ENCODE measurements at regions of chr1 and their contacts with region 1.

Region 1: DNA sequence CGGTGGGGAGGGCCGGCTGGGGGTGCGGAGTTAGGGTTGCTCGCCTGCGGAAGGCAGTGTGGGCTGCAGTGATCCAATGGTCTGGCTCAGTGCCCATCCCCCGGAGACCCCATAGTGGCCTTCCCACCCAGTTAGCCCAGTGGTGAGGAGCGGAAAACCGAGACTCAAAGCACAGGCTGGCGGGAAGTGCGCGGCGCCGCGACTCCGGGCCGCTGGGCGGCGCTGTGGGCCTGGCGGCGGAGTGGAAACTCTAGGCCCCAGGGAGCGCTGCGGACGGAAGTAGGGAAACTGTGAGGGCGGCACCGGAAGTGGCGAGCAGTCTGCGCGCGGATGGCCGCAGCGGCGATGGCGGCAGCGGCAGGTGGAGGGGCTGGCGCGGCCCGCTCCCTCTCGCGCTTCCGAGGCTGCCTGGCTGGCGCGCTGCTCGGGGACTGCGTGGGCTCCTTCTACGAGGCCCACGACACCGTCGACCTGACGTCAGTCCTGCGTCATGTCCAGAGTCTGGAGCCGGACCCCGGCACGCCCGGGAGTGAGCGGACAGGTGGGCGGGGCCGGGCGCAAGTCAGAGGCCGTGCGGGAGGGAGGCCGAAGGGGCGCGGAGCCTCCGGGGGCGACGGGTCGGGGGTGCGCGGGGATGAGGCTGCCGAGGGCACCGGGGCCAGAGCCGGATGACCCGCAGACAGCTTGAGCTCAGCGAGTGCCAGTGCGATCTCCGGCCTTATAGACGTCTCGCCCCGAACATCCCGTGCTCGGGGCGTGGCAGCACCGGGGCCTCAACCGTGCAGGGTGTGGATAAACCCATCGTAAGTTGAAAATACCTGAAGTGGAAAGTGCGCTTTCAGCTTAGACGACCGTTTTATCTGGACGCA is at the start of gene ADPRS:
- DNase-seq: peak; percentile 85 to 99 (median 89)

Region 2: DNA sequence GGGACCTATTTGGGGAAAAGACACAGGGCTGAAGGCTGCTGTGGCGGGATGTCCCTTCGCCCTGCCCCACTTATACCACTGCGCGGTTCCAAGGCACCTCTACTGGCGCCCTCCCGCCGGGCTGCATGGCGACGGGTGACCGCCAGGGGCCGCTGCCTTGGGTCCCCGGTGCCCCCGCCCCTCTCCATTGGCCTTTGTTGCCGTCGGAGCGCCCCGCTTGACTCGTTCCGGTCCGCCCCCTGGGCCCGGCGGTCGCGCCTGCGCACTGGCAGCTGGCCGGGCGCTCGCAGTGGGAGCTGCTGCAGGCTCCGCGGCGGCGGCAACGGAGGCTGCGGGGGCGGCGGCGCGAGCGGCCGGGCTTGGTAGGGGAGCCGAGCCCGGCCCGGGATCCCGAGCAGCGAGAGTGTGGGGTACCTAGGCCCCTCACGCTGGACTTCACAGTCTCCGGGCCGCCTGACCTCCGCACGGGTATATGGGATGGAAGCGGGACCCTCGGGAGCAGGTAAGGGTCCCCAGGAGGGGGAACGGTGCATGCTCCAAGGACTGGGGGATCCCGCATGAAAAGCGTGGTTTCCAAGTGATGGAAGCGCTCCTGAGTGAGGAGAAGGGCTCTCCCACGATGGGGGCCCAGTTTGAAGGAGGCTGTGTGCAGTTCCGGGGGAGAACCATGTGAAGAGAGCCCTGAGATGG is 205.7 kb before region 1 on chr1 and contains the start of gene AGO1:
- intact Hi-C with region 1: loop called (anchors 5 kb)
- DNase-seq: peak; percentile 90 to 99 (median 95)